Vagina (tissue), 2 donors: ENCODE measurements at regions of chr4 and their contacts with region 1.

Region 1: GRCh38 chr4:88659055-88659889 is 38.4 kb downstream of the NAP1L5 start:
- DNase-seq: no peak
- H3K4me3 ChIP-seq: no peak overlapping the region
- H3K27ac ChIP-seq: no peak overlapping the region
- H3K4me1 ChIP-seq: peaks cover 25% of the 10 kb centered on the region
- H3K27me3 ChIP-seq: no peaks in the 10 kb centered on the region
- CTCF ChIP-seq: peak in 1 of 3 experiments; percentile 47
- POLR2A ChIP-seq: no peak

Region 2: DNA sequence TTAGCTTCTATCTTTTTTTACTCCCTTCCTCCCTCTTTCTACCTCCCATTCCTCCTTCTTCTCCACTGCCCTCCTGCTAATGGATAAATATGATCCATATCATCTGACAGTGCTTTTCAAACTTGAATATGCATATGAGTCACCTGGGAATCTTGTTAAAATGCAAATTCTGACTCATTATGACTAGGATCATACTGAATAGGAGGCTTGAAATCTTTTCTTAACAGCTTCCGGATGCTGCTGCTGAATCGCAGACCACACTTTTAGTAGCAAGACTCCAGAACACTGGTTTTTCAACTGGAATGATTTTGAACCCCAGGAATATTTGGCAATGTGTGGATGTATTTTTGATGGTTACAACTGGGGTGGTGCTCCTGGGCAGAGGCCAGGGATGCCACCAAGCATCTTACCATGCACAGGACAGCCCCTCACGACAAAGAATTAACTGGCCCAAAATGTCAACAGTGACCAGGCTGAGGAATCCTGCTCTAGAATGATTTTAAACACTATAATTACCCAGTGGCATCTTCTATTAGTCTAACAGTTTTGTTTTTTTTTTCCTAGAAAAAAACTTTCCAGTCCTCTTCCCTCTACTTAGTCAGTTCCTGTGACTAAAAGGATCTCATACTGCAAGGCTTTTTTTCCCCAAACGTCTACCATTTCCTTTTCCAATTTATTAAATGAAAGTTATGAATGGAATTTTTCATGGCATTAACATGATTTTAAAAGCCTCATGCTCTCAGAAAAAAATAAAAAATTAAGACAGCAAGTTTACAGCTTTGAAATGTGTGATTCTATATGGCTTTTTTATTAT is 125.1 kb before region 1 on chr4:
- intact Hi-C with region 1: loop called (anchors 10 kb)
- DNase-seq: no peak
- H3K4me3 ChIP-seq: no peak overlapping the region
- H3K27ac ChIP-seq: no peak overlapping the region
- H3K4me1 ChIP-seq: no peaks in the 10 kb centered on the region
- H3K27me3 ChIP-seq: no peaks in the 10 kb centered on the region
- CTCF ChIP-seq: no peak
- POLR2A ChIP-seq: no peak

Region 3: GRCh38 chr4:88786011-88786410 is 126.7 kb after region 1 on chr4:
- intact Hi-C with region 1: no loop called
- DNase-seq: no peak
- H3K4me3 ChIP-seq: no peak overlapping the region
- H3K27ac ChIP-seq: no peak overlapping the region
- H3K4me1 ChIP-seq: no peaks in the 10 kb centered on the region
- H3K27me3 ChIP-seq: no peaks in the 10 kb centered on the region
- CTCF ChIP-seq: no peak
- POLR2A ChIP-seq: no peak

Region 4: DNA sequence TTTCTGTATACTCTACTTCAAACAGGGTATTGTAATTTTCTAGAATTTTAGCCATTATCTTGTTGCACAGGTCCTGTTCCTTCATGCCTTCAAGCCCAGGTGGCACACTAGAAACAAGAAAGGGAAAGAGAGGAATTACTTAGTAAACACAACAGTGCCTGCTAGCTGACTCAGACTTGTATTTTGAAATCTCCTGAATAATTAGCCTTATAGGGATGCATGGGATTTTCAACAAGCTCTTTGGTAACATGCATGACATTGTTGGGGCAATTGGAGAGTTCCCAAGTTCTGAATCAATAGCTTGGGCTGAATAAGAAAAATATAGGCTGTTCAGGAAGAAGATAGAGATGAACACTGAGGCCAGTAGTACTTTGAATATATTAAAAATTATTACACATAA is 278.9 kb after region 1 on chr4:
- intact Hi-C with region 1: no loop called
- DNase-seq: no peak
- H3K4me3 ChIP-seq: no peak overlapping the region
- H3K27ac ChIP-seq: no peak overlapping the region
- H3K4me1 ChIP-seq: no peaks in the 10 kb centered on the region
- H3K27me3 ChIP-seq: no peaks in the 10 kb centered on the region
- CTCF ChIP-seq: no peak
- POLR2A ChIP-seq: no peak

Region 5: DNA sequence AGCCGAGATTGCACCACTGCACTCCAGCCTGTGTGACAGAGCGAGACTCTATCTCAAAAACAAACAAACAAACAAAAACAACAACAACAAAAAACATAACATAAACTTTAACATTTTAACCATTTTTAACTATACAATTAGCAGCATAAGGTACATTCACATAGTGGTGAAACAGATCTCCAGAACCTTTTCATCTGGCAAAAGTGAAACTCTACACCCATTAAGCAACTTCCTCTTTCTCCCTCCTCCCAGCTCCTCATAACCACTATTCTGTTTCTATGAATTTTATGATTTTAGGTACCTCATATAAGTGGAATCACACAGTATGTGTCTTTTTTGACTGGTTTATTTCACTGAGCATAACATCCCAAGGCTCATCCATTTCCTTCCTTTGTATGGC is 294.1 kb after region 1 on chr4:
- intact Hi-C with region 1: no loop called
- DNase-seq: no peak
- H3K4me3 ChIP-seq: no peak overlapping the region
- H3K27ac ChIP-seq: no peak overlapping the region
- H3K4me1 ChIP-seq: peaks cover 8% of the 10 kb centered on the region
- H3K27me3 ChIP-seq: no peaks in the 10 kb centered on the region
- CTCF ChIP-seq: no peak
- POLR2A ChIP-seq: no peak